Lower leg skin (tissue), 4 donors: ENCODE measurements at regions of chr1 and their contacts with region 1.

Region 1: DNA sequence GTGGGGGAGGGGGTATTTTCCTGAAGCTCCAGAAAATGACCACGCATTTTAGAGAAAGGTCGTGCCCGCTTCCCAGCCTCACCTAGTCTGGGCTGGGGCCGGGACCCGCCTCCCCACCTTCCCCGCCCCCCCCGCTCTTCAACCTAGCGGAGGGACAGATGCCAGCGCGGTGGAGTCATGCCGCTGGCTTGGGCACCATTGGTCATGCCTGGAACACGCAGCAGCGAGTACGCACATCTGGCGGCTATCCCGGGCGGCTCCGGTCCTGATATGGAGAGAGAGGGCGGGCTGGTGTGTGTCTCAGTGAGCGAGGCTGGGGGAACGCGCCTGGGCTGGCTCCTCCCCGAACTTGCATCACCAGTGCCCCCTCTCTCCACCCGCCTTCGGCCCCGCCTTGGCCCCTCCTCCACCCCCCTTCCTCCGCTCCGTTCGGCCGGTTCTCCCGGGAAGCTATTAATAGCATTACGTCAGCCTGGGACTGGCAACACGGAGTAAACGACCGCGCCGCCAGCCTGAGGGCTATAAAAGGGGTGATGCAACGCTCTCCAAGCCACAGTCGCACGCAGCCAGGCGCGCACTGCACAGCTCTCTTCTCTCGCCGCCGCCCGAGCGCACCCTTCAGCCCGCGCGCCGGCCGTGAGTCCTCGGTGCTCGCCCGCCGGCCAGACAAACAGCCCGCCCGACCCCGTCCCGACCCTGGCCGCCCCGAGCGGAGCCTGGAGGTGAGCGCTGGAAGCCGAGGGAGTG is at the start of gene ATF3:
- DNase-seq: peak; percentile 99 to 100
- H3K4me3 ChIP-seq: peak within 1 kb of the TSS; percentile 75
- CTCF ChIP-seq: no peak
- POLR2A ChIP-seq: peak in 1 of 2 donors; percentile 98
- total RNA-seq, gene ATF3: 8.2 to 71.6 (median 17.2) TPM

Region 2: DNA sequence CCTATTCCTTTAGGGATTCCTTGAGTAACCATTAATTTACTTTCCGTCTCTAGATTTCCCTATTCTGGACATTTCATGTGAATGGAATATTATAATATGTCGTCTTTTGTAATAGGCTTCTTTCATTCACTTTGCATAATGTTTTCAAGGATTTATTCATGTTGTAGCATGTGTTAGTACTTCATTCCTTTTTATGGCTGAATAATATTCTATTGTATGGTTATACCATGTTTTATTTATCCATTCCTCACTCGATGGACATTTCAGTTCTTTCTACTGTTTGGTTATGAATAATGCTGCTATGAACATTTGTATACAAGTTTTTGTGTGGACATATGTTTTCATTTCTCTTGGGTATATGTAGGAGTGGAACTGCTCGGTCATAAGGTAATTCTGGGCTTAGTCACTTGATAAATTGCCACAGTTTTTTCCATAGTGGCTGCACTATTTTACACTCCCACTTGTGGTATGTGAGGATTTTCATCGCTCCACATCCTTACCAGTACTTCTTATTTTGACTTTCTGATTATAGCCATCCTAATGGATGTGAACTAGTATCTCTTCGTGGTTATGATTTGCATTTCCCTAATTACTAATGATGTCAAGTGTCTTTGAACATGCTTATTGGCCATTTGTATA is 305.5 kb before region 1 on chr1:
- intact Hi-C with region 1: no loop called
- DNase-seq: no peak
- H3K4me3 ChIP-seq: no peak overlapping the region
- CTCF ChIP-seq: no peak
- POLR2A ChIP-seq: no peak

Region 3: DNA sequence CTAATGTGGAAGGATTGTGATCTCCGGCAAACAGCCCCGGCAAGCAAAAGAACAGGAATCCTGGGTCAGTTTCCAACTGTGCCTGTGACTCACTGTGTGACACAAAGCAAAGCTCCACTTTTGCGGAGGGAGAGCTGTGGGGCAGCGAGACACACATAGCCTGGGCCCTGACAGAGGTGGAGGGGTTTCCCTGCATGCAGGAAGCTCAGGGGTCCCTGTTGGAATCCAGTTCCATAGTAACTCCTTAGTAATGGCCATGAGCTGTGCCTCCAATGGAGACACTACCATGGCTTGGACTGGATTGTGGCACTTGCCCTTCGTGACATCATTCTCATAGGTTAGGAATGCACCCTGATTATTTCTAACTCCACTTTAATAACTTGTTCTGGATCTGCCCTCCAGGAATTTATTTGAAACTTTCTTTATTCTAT is 46.9 kb before region 1 on chr1:
- intact Hi-C with region 1: loop called (anchors 5 kb)
- DNase-seq: peak in 1 of 2 donors; percentile 48
- H3K4me3 ChIP-seq: no peak overlapping the region
- CTCF ChIP-seq: no peak
- POLR2A ChIP-seq: no peak

Region 4: DNA sequence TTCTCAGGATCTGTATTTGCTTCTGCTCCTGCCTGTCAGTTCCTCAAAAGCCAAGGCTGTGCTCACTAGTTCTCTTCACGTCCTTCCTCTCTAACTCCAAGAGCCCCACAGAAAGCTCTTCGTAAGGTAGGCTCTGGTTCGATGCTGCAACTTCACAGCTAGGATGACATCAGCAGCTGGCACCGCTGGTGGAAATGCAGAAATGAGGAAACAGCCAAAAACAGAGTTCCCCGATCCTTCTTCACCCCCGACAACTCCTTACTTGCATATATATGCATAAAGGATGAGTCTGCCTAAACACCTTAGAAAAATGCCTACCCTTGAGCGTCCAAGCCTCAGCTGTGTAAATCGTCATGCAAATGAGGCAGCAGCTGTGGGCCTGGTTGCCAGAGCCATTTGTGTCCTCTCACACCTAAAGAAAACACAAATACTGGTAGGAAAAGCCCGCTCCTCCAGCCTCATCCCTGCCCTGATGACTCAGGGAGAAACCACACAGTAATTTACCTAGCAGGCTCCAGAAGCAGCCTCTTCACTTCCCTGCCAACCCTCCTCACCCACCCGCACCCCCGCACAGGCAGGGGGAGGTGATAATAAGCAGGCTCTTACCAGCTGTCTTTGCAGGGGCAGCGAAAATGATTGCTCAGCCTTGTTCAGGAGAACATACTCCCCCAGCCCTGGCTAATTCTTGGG is 63.1 kb after region 1 on chr1:
- intact Hi-C with region 1: no loop called
- DNase-seq: peak in 1 of 2 donors; percentile 34
- H3K4me3 ChIP-seq: no peak overlapping the region
- CTCF ChIP-seq: no peak
- POLR2A ChIP-seq: no peak